CD8-positive, alpha-beta T cell (primary cell): ENCODE measurements at regions of chr12 and their contacts with region 1.

Region 1: GRCh38 chr12:46546634-46547286 is 174.2 kb upstream of the SLC38A2 start:
- DNase-seq: peak in 2 of 9 experiments; percentile 15 to 35
- ATAC-seq: no peak
- H3K4me3 ChIP-seq: no peak overlapping the region
- H3K4me3 Mint-ChIP-seq: no peak overlapping the region
- H3K27ac ChIP-seq: peak overlapping the region in 1 of 2 experiments; percentile 42
- H3K27ac Mint-ChIP-seq: peak overlapping the region; percentile 39
- H3K4me1 ChIP-seq: peaks cover 22% of the 10 kb centered on the region
- H3K4me1 Mint-ChIP-seq: peaks cover 47% of the 10 kb centered on the region
- H3K27me3 ChIP-seq: no peaks in the 10 kb centered on the region
- H3K27me3 Mint-ChIP-seq: no peaks in the 10 kb centered on the region
- CTCF ChIP-seq: no peak

Region 2: GRCh38 chr12:46276756-46277155 is 270.0 kb before region 1 on chr12:
- CTCF ChIA-PET with region 1: no interaction called
- POLR2A ChIA-PET with region 1: no interaction called
- intact Hi-C with region 1: no loop called
- DNase-seq: no peak
- ATAC-seq: no peak
- H3K4me3 ChIP-seq: no peak overlapping the region
- H3K4me3 Mint-ChIP-seq: no peak overlapping the region
- H3K27ac ChIP-seq: no peak overlapping the region
- H3K27ac Mint-ChIP-seq: peak overlapping the region; percentile 30
- H3K4me1 ChIP-seq: peaks cover 12% of the 10 kb centered on the region
- H3K4me1 Mint-ChIP-seq: peaks cover 25% of the 10 kb centered on the region
- H3K27me3 ChIP-seq: no peaks in the 10 kb centered on the region
- H3K27me3 Mint-ChIP-seq: no peaks in the 10 kb centered on the region
- CTCF ChIP-seq: no peak

Region 3: DNA sequence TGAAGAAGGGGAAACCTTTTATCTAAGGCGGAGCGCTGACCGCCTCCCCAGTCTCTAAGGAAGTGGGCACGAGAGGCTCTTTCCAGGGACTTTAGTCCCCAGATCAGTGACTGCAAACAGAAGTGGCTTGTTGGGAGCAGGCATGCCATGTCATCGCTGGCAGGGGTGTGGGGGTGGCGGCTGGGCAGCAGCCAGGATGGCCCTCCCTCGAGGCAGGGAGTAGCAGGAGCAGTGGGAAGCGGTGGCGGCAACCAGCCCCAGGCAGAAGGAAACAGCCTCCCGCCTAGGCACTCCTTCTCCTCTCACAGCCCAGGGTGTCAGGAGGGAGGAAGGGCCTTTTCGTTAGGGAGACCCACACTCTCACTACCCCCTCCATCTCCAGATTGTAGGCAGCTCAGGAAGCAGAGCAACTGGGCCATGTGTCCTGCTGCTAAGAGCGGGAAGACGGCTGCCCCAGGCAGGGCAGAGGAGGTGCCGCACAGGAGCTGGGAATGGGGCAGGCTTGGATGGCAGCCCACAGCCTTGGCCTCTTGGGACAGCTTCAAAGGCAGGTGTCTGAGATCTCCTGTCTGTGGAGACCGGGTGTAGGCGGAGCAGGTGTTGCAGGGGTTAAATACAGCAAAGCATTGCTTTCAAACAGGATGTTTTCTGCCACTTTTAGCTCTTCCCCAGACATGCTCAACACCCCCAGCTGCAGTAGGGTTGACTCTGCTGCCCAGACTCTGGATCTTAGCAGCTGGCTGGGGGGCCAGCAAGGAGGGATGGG is 1336.2 kb after region 1 on chr12:
- CTCF ChIA-PET with region 1: no interaction called
- POLR2A ChIA-PET with region 1: no interaction called
- intact Hi-C with region 1: loop called in 1 of 2 experiments (anchors 5 kb)
- DNase-seq: peak in 4 of 9 experiments; percentile 7 to 66 (median 34)
- ATAC-seq: peak; percentile 81
- H3K4me3 ChIP-seq: peak overlapping the region; percentile 28 to 52
- H3K4me3 Mint-ChIP-seq: peak overlapping the region; percentile 86
- H3K27ac ChIP-seq: no peak overlapping the region
- H3K27ac Mint-ChIP-seq: peak overlapping the region; percentile 69
- H3K4me1 ChIP-seq: peaks cover 36% of the 10 kb centered on the region
- H3K4me1 Mint-ChIP-seq: peaks cover 44% of the 10 kb centered on the region
- H3K27me3 ChIP-seq: peaks cover 0 to 2% of the 10 kb centered on the region in 2 experiments
- H3K27me3 Mint-ChIP-seq: no peaks in the 10 kb centered on the region
- CTCF ChIP-seq: no peak